CD4-positive, alpha-beta T cell (primary cell): ENCODE measurements at regions of chr3 and their contacts with region 1.

Region 1: GRCh38 chr3:138180375-138181029 is 5.8 kb upstream of the DBR1 start:
- DNase-seq: peak in 10 of 14 experiments; percentile 4 to 67 (median 29)
- ATAC-seq: peak; percentile 88
- H3K4me3 ChIP-seq: no peak overlapping the region
- H3K4me3 Mint-ChIP-seq: no peak overlapping the region
- H3K27ac ChIP-seq: no peak overlapping the region
- H3K27ac Mint-ChIP-seq: no peak overlapping the region
- H3K4me1 ChIP-seq: no peaks in the 10 kb centered on the region
- H3K4me1 Mint-ChIP-seq: no peaks in the 10 kb centered on the region
- H3K27me3 ChIP-seq: peaks cover 0 to 8% of the 10 kb centered on the region in 2 experiments
- H3K27me3 Mint-ChIP-seq: peaks cover 4% of the 10 kb centered on the region
- CTCF ChIP-seq: peak; percentile 70

Region 2: GRCh38 chr3:138271189-138271794 is 90.8 kb after region 1 on chr3:
- CTCF ChIA-PET with region 1: no interaction called
- POLR2A ChIA-PET with region 1: no interaction called
- intact Hi-C with region 1: loop called in 1 of 2 experiments (anchors 5 kb)
- DNase-seq: no peak
- ATAC-seq: no peak
- H3K4me3 ChIP-seq: no peak overlapping the region
- H3K4me3 Mint-ChIP-seq: no peak overlapping the region
- H3K27ac ChIP-seq: no peak overlapping the region
- H3K27ac Mint-ChIP-seq: no peak overlapping the region
- H3K4me1 ChIP-seq: no peaks in the 10 kb centered on the region
- H3K4me1 Mint-ChIP-seq: no peaks in the 10 kb centered on the region
- H3K27me3 ChIP-seq: no peaks in the 10 kb centered on the region
- H3K27me3 Mint-ChIP-seq: no peaks in the 10 kb centered on the region
- CTCF ChIP-seq: no peak

Region 3: DNA sequence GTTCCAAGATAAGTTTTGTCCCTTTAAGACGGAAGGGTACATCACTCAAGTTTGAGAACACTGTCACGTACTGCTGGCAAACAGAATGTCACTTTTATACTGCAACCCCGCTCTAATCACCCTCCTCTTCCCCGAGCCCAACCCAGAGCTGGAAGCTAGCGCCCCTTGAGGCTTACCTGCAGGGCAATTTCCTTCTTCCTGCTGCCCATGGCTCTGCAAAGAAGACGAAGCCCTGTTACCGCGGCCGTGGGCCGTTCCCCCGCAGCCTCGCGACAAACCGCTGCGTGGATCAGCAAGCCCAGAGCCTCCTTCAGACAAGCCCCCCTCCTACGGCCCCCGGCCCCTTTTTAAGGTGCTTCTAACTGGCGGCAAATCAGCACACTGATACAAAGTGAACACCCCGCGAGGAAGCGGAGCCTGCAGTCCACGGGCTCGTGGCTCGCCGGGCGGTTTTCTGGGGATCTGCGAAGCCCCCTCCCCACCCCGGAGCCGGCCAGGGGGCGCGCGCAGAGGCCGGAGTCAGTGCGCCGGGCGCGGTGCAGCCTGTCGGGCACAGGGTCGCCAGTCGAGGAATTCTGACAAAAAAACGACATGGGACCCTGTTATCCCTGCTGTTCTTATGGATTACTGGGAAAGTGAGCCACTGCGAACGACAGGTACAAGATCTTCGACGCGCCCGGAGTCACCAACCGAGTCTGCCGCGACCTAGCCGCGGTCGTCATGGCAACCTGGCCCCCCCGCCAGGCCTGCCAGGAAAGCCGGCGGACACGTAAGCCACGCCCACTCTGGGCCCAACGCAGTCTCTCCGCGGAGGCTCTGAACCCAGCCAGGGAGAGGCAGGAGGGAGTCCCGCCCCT is 148.9 kb after region 1 on chr3 and contains the start of gene NME9:
- CTCF ChIA-PET with region 1: no interaction called
- POLR2A ChIA-PET with region 1: no interaction called
- intact Hi-C with region 1: loop called (anchors 2 to 5 kb)
- DNase-seq: peak; percentile 80 to 97 (median 90)
- ATAC-seq: peak; percentile 85
- H3K4me3 ChIP-seq: peak within 1 kb of the TSS; percentile 69
- H3K4me3 Mint-ChIP-seq: peak within 1 kb of the TSS; percentile 98
- H3K27ac ChIP-seq: peak within 1 kb of the TSS; percentile 49 to 81
- H3K27ac Mint-ChIP-seq: peak within 1 kb of the TSS; percentile 88
- H3K4me1 ChIP-seq: peaks cover 20% of the 10 kb centered on the region
- H3K4me1 Mint-ChIP-seq: peaks cover 37% of the 10 kb centered on the region
- H3K27me3 ChIP-seq: no peaks in the 10 kb centered on the region
- H3K27me3 Mint-ChIP-seq: no peaks in the 10 kb centered on the region
- CTCF ChIP-seq: peak; percentile 71
- total RNA-seq, gene NME9: 0.80 TPM in 1 of 2 experiments, not detected in the other

Region 4: GRCh38 chr3:138347960-138348753 is 167.7 kb after region 1 on chr3 and contains the start of gene MRAS:
- CTCF ChIA-PET with region 1: no interaction called
- POLR2A ChIA-PET with region 1: no interaction called
- intact Hi-C with region 1: loop called in 1 of 2 experiments (anchors 5 kb)
- DNase-seq: peak in 7 of 14 experiments; percentile 2 to 56 (median 27)
- ATAC-seq: peak; percentile 66
- H3K4me3 ChIP-seq: peak within 1 kb of the TSS; percentile 58
- H3K4me3 Mint-ChIP-seq: peak within 1 kb of the TSS; percentile 89
- H3K27ac ChIP-seq: no peak within 1 kb of the TSS
- H3K27ac Mint-ChIP-seq: peak within 1 kb of the TSS; percentile 5
- H3K4me1 ChIP-seq: peaks cover 9% of the 10 kb centered on the region
- H3K4me1 Mint-ChIP-seq: peaks cover 9% of the 10 kb centered on the region
- H3K27me3 ChIP-seq: peaks cover 25 to 26% of the 10 kb centered on the region in 2 experiments
- H3K27me3 Mint-ChIP-seq: peaks cover 51% of the 10 kb centered on the region
- CTCF ChIP-seq: peak; percentile 15
- total RNA-seq, gene MRAS: 0.45 to 0.47 TPM

Region 5: GRCh38 chr3:138397983-138398382 is 217.5 kb after region 1 on chr3:
- CTCF ChIA-PET with region 1: no interaction called
- POLR2A ChIA-PET with region 1: no interaction called
- intact Hi-C with region 1: loop called in 1 of 2 experiments (anchors 5 kb)
- DNase-seq: peak in 2 of 14 experiments; percentile 17 to 22
- ATAC-seq: no peak
- H3K4me3 ChIP-seq: no peak overlapping the region
- H3K4me3 Mint-ChIP-seq: no peak overlapping the region
- H3K27ac ChIP-seq: no peak overlapping the region
- H3K27ac Mint-ChIP-seq: no peak overlapping the region
- H3K4me1 ChIP-seq: no peaks in the 10 kb centered on the region
- H3K4me1 Mint-ChIP-seq: no peaks in the 10 kb centered on the region
- H3K27me3 ChIP-seq: no peaks in the 10 kb centered on the region
- H3K27me3 Mint-ChIP-seq: no peaks in the 10 kb centered on the region
- CTCF ChIP-seq: no peak